HAP-1 (cell line): ENCODE measurements at regions of chr11 and their contacts with region 1.

Region 1: GRCh38 chr11:6377902-6378639 is 12.2 kb upstream of the SMPD1 start:
- DNase-seq: no peak
- H3K4me3 ChIP-seq: no peak overlapping the region
- H3K4me1 ChIP-seq: peaks cover 4% of the 10 kb centered on the region
- H3K27me3 ChIP-seq: no peaks in the 10 kb centered on the region

Region 2: DNA sequence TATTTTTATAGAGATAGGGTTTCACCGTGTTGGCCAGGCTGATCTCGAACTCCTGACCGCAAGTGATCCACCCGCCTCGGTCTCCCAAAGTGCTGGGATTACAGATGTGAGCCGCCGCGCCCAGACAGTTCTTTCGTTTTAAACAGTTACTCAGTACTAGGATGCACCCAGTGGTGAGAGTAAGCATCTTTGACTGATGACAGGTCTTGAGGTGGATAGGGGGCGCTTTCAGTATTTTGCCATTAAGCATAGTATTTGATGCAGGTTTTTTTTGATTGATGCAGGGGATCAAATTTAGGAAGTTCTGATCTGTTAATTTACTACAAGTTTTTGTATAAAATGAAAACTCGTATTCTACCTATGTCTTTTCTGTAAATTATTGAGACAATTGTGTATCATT is 766.4 kb before region 1 on chr11:
- in situ Hi-C with region 1: no loop called
- DNase-seq: no peak
- H3K4me3 ChIP-seq: no peak overlapping the region
- H3K4me1 ChIP-seq: no peaks in the 10 kb centered on the region
- H3K27me3 ChIP-seq: no peaks in the 10 kb centered on the region

Region 3: GRCh38 chr11:6505577-6506240 is 127.6 kb after region 1 on chr11:
- in situ Hi-C with region 1: loop called (anchors 10 kb)
- DNase-seq: peak; percentile 33 to 47
- H3K4me3 ChIP-seq: no peak overlapping the region
- H3K4me1 ChIP-seq: no peaks in the 10 kb centered on the region
- H3K27me3 ChIP-seq: no peaks in the 10 kb centered on the region